ENCODE measurements at regions of chr3 and their contacts with region 1.

Region 1: GRCh38 chr3:141105828-141106628 is 54.9 kb downstream of the SPSB4 start:
- DNase-seq: peak; percentile 54 to 77 (median 58)
- ATAC-seq: peak; percentile 83
- H3K4me3 ChIP-seq: no peak overlapping the region
- H3K27ac ChIP-seq: no peak overlapping the region
- H3K4me1 ChIP-seq: no peaks in the 10 kb centered on the region
- H3K27me3 ChIP-seq: peaks cover 9 to 42% of the 10 kb centered on the region in 2 experiments; a peak in 4 of 5 replicates
- CTCF ChIP-seq: peak; percentile 75 to 82 (median 75)
- EP300 ChIP-seq: no peak
- POLR2A ChIP-seq: no peak
- RAD21 ChIP-seq: peak; percentile 68 to 83

Region 2: GRCh38 chr3:140898340-140899180 is 207.5 kb before region 1 on chr3:
- CTCF ChIA-PET with region 1: interaction called, 8 read pairs
- POLR2A ChIA-PET with region 1: interaction called, 3 read pairs
- in situ Hi-C with region 1: no loop called
- intact Hi-C with region 1: loop called (anchors 5 kb)
- DNase-seq: peak; percentile 23 to 48 (median 38)
- ATAC-seq: peak; percentile 72
- H3K4me3 ChIP-seq: no peak overlapping the region
- H3K27ac ChIP-seq: no peak overlapping the region
- H3K4me1 ChIP-seq: no peaks in the 10 kb centered on the region
- H3K27me3 ChIP-seq: no peaks in the 10 kb centered on the region; a peak in 1 of 5 replicates
- CTCF ChIP-seq: peak; percentile 44 to 75 (median 70); a peak in 5 of 6 replicates
- EP300 ChIP-seq: no peak
- POLR2A ChIP-seq: no peak
- RAD21 ChIP-seq: peak; percentile 63 to 65

Region 3: DNA sequence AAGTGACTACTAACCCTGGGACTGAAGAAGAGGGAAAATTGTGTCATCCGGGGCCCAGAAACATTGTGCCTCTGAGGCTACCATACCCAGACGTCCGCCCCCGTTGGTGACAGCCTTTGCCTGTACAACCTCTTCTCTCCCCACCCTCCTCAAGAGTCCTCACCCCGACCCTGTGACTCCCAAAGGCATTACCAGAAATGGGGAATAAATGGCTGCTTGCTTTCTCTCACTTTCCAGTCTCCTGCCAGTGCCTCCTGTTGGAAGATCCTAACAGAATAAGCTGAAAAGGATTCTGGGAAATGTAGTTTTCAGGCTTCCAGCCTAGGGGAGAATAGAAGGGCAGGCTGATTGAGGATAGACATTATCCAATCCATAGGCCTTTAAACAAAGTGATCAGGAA is 195.2 kb before region 1 on chr3:
- CTCF ChIA-PET with region 1: no interaction called
- POLR2A ChIA-PET with region 1: no interaction called
- in situ Hi-C with region 1: loop called (anchors 10 kb)
- intact Hi-C with region 1: no loop called
- DNase-seq: peak; percentile 27 to 38 (median 30)
- ATAC-seq: peak; percentile 90
- H3K4me3 ChIP-seq: peak overlapping the region; percentile 27
- H3K27ac ChIP-seq: no peak overlapping the region
- H3K4me1 ChIP-seq: no peaks in the 10 kb centered on the region
- H3K27me3 ChIP-seq: peaks cover 0 to 8% of the 10 kb centered on the region in 2 experiments; a peak in 2 of 5 replicates
- CTCF ChIP-seq: peak in 2 of 3 experiments; percentile 31 to 33; a peak in 2 of 6 replicates
- EP300 ChIP-seq: no peak
- POLR2A ChIP-seq: no peak
- RAD21 ChIP-seq: no peak

Region 4: DNA sequence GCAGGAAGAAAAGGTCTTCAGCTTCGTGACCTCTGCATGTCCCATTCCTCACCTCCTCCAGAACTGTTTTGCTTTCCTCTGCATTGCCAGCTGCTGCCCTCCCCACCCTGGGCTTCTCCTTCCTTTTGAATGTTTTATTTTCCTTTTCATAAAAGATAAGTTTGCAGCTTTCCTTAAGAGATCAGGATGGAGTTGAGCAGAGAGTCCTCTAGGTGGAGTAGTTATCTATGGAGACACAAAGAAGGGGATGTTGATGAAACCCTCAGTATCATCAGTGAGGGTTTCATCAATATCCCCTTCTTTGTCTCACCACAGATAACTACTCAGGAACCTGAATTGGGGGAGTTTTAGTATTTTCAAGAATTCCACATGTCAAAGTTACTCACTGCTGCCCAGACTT is 183.4 kb before region 1 on chr3:
- CTCF ChIA-PET with region 1: no interaction called
- POLR2A ChIA-PET with region 1: no interaction called
- in situ Hi-C with region 1: loop called (anchors 10 kb)
- intact Hi-C with region 1: loop called (anchors 10 kb)
- DNase-seq: peak in 3 of 4 experiments; percentile 19 to 42 (median 20)
- ATAC-seq: peak; percentile 85
- H3K4me3 ChIP-seq: no peak overlapping the region
- H3K27ac ChIP-seq: no peak overlapping the region
- H3K4me1 ChIP-seq: no peaks in the 10 kb centered on the region
- H3K27me3 ChIP-seq: peaks cover 0 to 4% of the 10 kb centered on the region in 2 experiments; a peak in 3 of 5 replicates
- CTCF ChIP-seq: peak; percentile 39 to 56 (median 55); a peak in 5 of 6 replicates
- EP300 ChIP-seq: no peak
- POLR2A ChIP-seq: no peak
- RAD21 ChIP-seq: peak; percentile 20 to 59; a peak in 3 of 4 replicates

Region 5: DNA sequence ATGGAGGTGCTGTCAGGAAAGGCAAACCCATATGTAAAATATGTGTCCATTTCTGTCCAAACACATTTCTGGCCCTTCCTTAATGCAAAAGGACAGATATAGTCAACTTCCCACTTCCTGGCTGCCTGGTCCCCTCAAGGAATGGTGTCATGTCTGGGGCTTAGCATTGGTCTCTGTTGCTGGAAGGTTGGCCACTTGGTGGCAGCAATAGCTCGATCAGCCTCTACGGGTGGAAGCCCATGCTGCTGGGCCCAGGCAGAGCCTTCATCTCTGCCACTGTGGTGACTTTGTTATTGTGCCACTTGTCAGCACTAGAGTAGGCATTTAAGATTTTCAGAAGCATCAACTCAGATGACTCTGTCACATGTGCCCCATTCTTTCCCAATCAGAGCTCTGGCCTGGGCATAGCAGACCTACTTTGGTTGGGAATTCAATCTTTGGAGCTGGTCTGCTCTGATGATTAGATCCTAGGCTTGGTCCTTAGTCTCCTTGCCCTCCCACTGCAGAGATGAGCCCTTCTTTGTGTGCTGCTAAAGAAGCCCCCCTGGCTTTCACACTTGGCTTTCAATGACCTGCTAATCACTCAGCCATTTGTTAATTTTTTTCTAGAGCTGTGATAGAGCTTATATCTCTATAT is 105.9 kb before region 1 on chr3:
- CTCF ChIA-PET with region 1: interaction called, 13 read pairs
- POLR2A ChIA-PET with region 1: no interaction called
- in situ Hi-C with region 1: no loop called
- intact Hi-C with region 1: loop called (anchors 1 kb)
- DNase-seq: peak; percentile 20 to 65 (median 33)
- ATAC-seq: peak; percentile 99
- H3K4me3 ChIP-seq: no peak overlapping the region
- H3K27ac ChIP-seq: no peak overlapping the region
- H3K4me1 ChIP-seq: no peaks in the 10 kb centered on the region
- H3K27me3 ChIP-seq: peaks cover 0 to 6% of the 10 kb centered on the region in 2 experiments; a peak in 1 of 5 replicates
- CTCF ChIP-seq: peak; percentile 76 to 84 (median 79)
- EP300 ChIP-seq: no peak
- POLR2A ChIP-seq: no peak
- RAD21 ChIP-seq: peak; percentile 76 to 77

Region 6: DNA sequence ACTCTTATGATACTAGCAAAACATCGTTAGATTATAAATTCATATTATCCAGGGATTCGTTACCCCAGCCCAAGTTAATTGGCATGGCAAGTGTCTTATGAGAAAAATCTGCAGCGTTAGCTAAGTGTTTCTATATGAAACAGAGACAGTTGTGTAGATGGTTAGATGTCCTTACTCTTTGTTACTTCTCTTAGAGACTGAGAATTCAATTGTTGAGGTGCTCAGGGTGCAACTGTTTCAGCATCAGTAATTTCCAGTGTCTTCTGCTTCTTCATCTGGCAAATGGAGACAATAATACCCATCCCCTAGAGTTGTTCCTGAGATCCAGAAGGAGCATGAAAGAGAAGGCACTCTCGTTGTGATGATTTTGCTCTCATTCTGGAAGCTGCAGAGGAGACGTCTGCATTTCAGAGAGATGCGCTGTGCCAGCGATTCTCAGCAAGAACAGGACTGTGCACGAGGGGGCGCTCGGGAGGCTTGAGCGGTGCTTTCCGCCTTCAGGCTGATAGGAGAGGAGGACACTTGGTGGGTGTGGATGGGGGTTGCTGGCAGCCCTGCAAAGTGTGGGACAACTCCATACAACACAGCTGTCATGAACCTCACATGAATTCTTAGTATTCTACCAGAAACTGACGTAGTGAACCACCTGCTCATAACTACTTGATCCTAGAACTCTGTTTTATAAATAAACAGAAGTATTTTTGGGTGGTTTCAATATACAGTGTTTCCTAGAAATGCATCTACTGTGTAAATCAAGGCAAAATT is 94.6 kb before region 1 on chr3:
- CTCF ChIA-PET with region 1: interaction called, 12 read pairs
- POLR2A ChIA-PET with region 1: no interaction called
- in situ Hi-C with region 1: loop called (anchors 5 kb)
- intact Hi-C with region 1: loop called (anchors 1 kb)
- DNase-seq: peak; percentile 49 to 80 (median 60)
- ATAC-seq: peak; percentile 99
- H3K4me3 ChIP-seq: no peak overlapping the region
- H3K27ac ChIP-seq: no peak overlapping the region
- H3K4me1 ChIP-seq: peaks cover 0 to 4% of the 10 kb centered on the region in 2 experiments; a peak in 1 of 5 replicates
- H3K27me3 ChIP-seq: peaks cover 9 to 29% of the 10 kb centered on the region in 2 experiments
- CTCF ChIP-seq: peak; percentile 86 to 95 (median 87)
- EP300 ChIP-seq: no peak
- POLR2A ChIP-seq: no peak
- RAD21 ChIP-seq: peak; percentile 59 to 79

Region 7: GRCh38 chr3:141049681-141050080 is 56.3 kb before region 1 on chr3:
- CTCF ChIA-PET with region 1: no interaction called
- POLR2A ChIA-PET with region 1: no interaction called
- in situ Hi-C with region 1: no loop called
- intact Hi-C with region 1: loop called (anchors 5 kb)
- DNase-seq: peak; percentile 16 to 34 (median 20)
- ATAC-seq: peak; percentile 81
- H3K4me3 ChIP-seq: no peak overlapping the region
- H3K27ac ChIP-seq: no peak overlapping the region
- H3K4me1 ChIP-seq: peaks cover 0 to 3% of the 10 kb centered on the region in 2 experiments; a peak in 1 of 5 replicates
- H3K27me3 ChIP-seq: peaks cover 9 to 51% of the 10 kb centered on the region in 2 experiments; a peak in 4 of 5 replicates
- CTCF ChIP-seq: peak; percentile 25 to 35 (median 32); a peak in 3 of 6 replicates
- EP300 ChIP-seq: no peak
- POLR2A ChIP-seq: no peak
- RAD21 ChIP-seq: no peak; a peak in 1 of 4 replicates

Region 8: GRCh38 chr3:141164852-141165251 is 58.8 kb after region 1 on chr3:
- CTCF ChIA-PET with region 1: no interaction called
- POLR2A ChIA-PET with region 1: no interaction called
- in situ Hi-C with region 1: no loop called
- intact Hi-C with region 1: no loop called
- DNase-seq: no peak
- ATAC-seq: no peak
- H3K4me3 ChIP-seq: no peak overlapping the region
- H3K27ac ChIP-seq: no peak overlapping the region
- H3K4me1 ChIP-seq: no peaks in the 10 kb centered on the region
- H3K27me3 ChIP-seq: peaks cover 0 to 2% of the 10 kb centered on the region in 2 experiments; a peak in 2 of 5 replicates
- CTCF ChIP-seq: no peak
- EP300 ChIP-seq: no peak
- POLR2A ChIP-seq: no peak
- RAD21 ChIP-seq: no peak